ENCODE measurements at regions of chr10 and their contacts with region 1.

Region 1: GRCh38 chr10:29735596-29736318 is 101.0 kb upstream of the SVIL start:
- DNase-seq: peak; percentile 96
- H3K4me3 ChIP-seq: peak overlapping the region; percentile 77 to 97 (median 88)
- H3K27ac ChIP-seq: peak overlapping the region; percentile 94 to 100 (median 98)
- H3K4me1 ChIP-seq: peaks cover 0 to 21% (median 15%) of the 10 kb centered on the region in 4 donors
- H3K27me3 ChIP-seq: no peaks in the 10 kb centered on the region
- CTCF ChIP-seq: peak; percentile 87 to 97 (median 92)
- EP300 ChIP-seq: no peak
- POLR2A ChIP-seq: peak in 1 of 2 donors; percentile 44

Region 2: DNA sequence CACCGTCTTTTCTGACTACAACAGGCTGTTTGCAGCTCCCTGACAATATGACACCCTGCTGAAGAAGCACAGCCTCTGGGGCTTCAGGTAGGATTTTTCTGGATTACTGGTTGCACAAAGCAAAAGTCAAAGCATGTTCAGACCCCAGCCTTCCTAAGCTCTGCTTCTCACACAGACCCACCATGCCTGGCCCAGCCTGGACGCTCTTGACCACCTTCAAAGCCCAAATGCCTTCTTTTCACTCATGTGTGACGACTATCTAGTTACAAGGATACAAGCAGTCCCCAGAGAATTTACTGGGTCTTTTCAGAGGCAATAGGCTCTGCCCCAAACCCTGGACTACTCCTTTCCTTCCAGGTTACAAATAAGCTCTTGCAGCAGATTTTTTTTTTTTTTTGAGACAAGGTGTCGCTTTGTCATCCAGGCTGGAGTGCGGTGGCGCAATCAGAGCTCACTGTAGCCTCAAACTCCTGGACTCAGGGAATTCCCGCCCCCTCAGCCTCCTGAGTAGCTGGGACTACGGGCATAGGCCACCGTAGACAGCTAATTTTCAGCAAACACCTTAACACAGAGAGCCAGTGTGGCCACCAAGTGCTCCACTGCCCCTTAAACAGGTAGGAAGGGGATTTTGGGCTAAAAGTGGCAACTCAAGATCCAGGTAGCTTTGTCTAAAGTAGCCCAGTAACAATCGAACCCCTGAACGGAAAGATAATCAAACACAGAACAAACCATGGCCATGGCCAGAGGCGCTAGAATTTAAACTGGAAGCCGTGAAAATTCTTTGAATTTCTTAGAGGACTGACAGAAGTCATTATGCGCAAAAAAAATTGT is 117.2 kb before region 1 on chr10:
- intact Hi-C with region 1: loop called (anchors 5 kb)
- DNase-seq: peak; percentile 83
- H3K4me3 ChIP-seq: peak overlapping the region in 3 of 4 donors; percentile 4 to 11 (median 9)
- H3K27ac ChIP-seq: peak overlapping the region; percentile 77 to 90 (median 86)
- H3K4me1 ChIP-seq: peaks cover 0 to 84% (median 75%) of the 10 kb centered on the region in 4 donors
- H3K27me3 ChIP-seq: no peaks in the 10 kb centered on the region
- CTCF ChIP-seq: no peak
- EP300 ChIP-seq: peak in 1 of 4 donors; percentile 30
- POLR2A ChIP-seq: no peak

Region 3: DNA sequence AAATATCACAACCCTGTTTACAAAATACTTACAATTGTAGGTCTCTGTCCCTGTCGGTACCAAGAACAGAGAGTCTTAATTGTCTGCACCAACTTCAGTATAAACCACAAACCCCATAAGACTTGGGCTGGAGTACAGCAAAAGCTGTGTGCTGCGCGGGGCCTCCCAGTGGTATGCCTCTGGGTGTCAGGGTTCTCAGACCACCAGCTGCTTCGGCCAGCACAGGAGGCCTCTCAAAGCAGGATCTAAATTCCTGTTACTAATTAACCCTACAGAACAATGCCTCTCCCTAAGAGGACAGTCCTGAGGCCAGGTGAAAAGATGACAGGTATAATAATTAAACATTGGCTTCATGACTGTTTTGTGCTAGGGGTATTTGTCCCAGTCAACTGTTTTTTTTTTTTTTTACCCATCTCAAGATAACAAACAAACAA is 100.0 kb before region 1 on chr10:
- intact Hi-C with region 1: loop called (anchors 5 kb)
- DNase-seq: no peak
- H3K4me3 ChIP-seq: peak overlapping the region in 1 of 4 donors; percentile 40
- H3K27ac ChIP-seq: peak overlapping the region; percentile 78 to 90 (median 88)
- H3K4me1 ChIP-seq: peaks cover 0 to 76% (median 48%) of the 10 kb centered on the region in 4 donors
- H3K27me3 ChIP-seq: no peaks in the 10 kb centered on the region
- CTCF ChIP-seq: no peak
- EP300 ChIP-seq: no peak
- POLR2A ChIP-seq: no peak

Region 4: GRCh38 chr10:29783201-29783947 is 47.6 kb after region 1 on chr10:
- intact Hi-C with region 1: loop called (anchors 2 kb)
- DNase-seq: no peak
- H3K4me3 ChIP-seq: no peak overlapping the region
- H3K27ac ChIP-seq: peak overlapping the region; percentile 65 to 86 (median 77)
- H3K4me1 ChIP-seq: peaks cover 0 to 42% (median 28%) of the 10 kb centered on the region in 4 donors
- H3K27me3 ChIP-seq: no peaks in the 10 kb centered on the region
- CTCF ChIP-seq: no peak
- EP300 ChIP-seq: no peak
- POLR2A ChIP-seq: no peak

Region 5: GRCh38 chr10:29811751-29812449 is 76.1 kb after region 1 on chr10:
- intact Hi-C with region 1: loop called (anchors 1 kb)
- DNase-seq: peak; percentile 93
- H3K4me3 ChIP-seq: peak overlapping the region in 1 of 4 donors; percentile 4
- H3K27ac ChIP-seq: peak overlapping the region; percentile 93 to 97 (median 96)
- H3K4me1 ChIP-seq: peaks cover 0 to 66% (median 59%) of the 10 kb centered on the region in 4 donors
- H3K27me3 ChIP-seq: no peaks in the 10 kb centered on the region
- CTCF ChIP-seq: no peak
- EP300 ChIP-seq: peak; percentile 86 to 98 (median 96)
- POLR2A ChIP-seq: peak in 1 of 2 donors; percentile 24

Region 6: DNA sequence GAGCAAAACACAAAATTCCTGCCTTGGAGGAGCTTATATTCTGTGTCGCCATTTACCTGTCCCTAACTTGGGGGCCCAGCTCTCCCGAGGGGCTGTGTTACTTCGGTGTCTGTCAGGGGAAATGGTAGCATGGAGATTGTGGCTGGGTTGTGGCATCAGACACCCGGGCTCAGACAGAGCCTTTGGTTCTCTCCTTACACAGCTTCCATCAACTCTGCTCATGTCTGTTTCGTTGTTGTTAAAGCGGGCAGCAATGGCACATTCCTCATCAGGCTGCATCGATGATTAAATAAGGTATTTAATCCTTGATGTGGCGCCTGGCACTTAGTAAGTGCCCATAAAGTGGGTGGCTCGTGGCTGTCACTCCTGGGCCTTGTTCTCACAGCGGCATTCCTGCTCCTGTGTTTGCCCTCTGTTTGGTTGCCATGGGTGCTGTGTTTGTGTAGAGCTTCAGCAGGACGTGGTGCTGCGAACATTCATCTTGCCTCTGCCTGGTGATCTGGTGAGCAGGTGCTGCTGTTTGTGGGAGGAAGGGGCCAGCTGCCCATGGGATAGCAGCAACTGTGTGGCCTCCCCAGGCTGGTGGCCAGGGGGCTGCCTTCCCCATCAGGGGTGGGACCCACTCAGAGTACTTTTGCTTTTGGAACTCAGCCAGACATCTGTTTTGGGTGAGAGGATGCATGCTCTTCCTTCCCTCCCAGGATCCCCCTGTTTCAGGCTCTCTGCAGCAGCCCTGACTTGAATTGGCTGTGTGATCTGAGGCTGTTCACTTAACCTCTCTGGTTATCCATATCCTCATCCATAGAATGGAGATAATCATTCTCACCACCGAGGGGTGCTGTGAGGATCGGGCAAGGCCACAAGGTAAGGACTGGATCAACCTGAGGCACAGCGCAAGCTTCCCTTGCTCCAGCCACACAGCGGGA is 106.2 kb after region 1 on chr10:
- intact Hi-C with region 1: loop called (anchors 2 kb)
- DNase-seq: peak; percentile 96
- H3K4me3 ChIP-seq: peak overlapping the region; percentile 27 to 46 (median 36)
- H3K27ac ChIP-seq: peak overlapping the region; percentile 88 to 97 (median 96)
- H3K4me1 ChIP-seq: peaks cover 0 to 74% (median 53%) of the 10 kb centered on the region in 4 donors
- H3K27me3 ChIP-seq: no peaks in the 10 kb centered on the region
- CTCF ChIP-seq: no peak
- EP300 ChIP-seq: peak; percentile 88 to 99 (median 96)
- POLR2A ChIP-seq: peak; percentile 16 to 46

Region 7: GRCh38 chr10:29857843-29858701 is 122.3 kb after region 1 on chr10:
- intact Hi-C with region 1: loop called (anchors 1 kb)
- DNase-seq: peak; percentile 91
- H3K4me3 ChIP-seq: peak overlapping the region in 1 of 4 donors; percentile 8
- H3K27ac ChIP-seq: peak overlapping the region; percentile 72 to 83 (median 77)
- H3K4me1 ChIP-seq: peaks cover 0 to 61% (median 38%) of the 10 kb centered on the region in 4 donors
- H3K27me3 ChIP-seq: no peaks in the 10 kb centered on the region
- CTCF ChIP-seq: peak; percentile 35 to 78 (median 70)
- EP300 ChIP-seq: peak; percentile 47 to 83 (median 54)
- POLR2A ChIP-seq: no peak

Measured in sigmoid colon (tissue), 7 donors.